AG04450 (cell line): ENCODE measurements at regions of chr3 and their contacts with region 1.

Region 1: GRCh38 chr3:53938645-53939044 is 47.0 kb upstream of the SELENOK start:
- DNase-seq: no peak
- H3K4me3 ChIP-seq: no peak overlapping the region
- H3K27ac ChIP-seq: no peak overlapping the region
- H3K27me3 ChIP-seq: no peaks in the 10 kb centered on the region
- CTCF ChIP-seq: peak; percentile 87

Region 2: DNA sequence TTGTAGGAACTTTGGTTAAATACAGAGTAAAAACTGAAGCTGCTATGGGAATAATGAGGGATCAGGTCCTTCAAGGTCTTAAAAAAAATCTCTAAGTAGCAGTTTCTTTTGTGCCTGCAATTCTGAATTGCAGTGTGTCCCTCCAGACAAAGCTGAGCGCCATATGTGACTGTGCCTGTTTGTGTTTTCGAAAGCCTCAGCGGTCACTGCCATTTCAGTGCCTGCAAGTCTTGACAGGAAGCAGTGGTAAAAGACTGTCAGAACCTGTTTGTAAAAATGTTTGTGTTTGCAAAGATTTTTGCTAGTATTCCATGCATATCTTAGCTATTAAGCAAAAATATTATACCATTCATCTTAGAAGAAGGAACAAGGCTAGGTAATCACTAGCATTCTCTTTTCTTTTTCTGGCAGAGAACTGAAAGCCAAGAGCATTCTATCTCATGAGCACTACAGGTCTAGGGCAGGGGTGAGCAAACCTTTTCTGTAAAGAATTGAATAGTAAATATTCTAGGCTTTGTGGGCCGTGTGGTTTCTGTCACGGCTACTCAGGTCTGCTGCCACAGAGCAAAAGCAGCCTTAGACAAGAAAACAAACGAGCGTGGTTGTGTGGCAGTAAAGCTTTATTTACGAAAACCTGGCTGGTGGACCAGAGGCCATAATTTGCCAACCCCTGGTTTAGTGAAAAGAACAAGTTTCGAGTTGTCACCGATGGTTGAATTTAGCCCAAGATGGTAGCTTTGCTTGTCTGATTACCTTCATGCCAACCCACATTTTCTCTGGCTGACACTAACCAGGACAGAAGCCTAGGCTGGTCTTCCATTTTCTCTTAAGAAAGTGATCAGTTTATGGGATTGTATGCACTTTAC is 309.9 kb before region 1 on chr3:
- CTCF ChIA-PET with region 1: no interaction called
- POLR2A ChIA-PET with region 1: no interaction called
- DNase-seq: no peak
- H3K4me3 ChIP-seq: no peak overlapping the region
- H3K27ac ChIP-seq: no peak overlapping the region
- H3K27me3 ChIP-seq: no peaks in the 10 kb centered on the region
- CTCF ChIP-seq: no peak

Region 3: DNA sequence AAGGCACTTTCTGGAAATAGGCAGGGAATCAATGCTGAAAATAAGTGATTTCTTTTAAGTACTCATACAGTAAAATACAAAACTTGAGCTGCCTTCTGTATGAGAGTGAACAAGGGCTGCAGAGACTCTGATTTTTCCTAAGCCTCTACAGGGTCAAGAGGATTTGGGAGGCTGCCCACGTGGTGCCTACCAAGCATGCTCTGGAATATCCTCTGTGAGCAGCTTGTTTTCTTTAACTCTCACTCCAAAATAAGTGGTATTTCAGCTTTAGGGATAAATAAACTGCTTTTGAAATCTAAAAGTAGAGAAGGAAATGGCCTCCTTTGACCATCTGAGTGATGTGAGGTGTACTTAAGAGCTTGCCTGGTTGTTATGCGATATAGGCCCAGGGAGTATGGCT is 38.9 kb before region 1 on chr3:
- CTCF ChIA-PET with region 1: interaction called, 10 read pairs
- POLR2A ChIA-PET with region 1: no interaction called
- DNase-seq: no peak
- H3K4me3 ChIP-seq: no peak overlapping the region
- H3K27ac ChIP-seq: no peak overlapping the region
- H3K27me3 ChIP-seq: no peaks in the 10 kb centered on the region
- CTCF ChIP-seq: no peak

Region 4: DNA sequence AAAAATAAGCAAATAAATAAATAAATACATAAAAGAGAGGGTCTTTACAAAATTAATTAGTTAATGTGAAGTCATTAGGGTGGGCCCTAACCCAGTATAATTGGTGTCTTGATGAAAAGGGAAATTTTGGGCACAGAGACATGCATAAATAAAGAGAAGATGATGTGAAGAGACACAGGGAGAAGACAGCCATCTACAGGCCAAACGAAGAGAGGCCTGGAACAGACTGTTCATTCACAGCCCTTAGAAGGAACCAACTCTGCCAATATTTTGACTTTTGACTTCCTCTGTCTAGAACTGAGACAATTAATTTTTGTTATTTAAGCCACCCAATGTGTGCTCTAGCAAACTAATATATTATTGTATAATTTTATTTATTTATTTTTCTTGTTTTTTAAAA is 17.3 kb before region 1 on chr3:
- CTCF ChIA-PET with region 1: interaction called, 11 read pairs
- POLR2A ChIA-PET with region 1: no interaction called
- DNase-seq: no peak
- H3K4me3 ChIP-seq: no peak overlapping the region
- H3K27ac ChIP-seq: no peak overlapping the region
- H3K27me3 ChIP-seq: peaks cover 3% of the 10 kb centered on the region
- CTCF ChIP-seq: peak; percentile 52